K562 (cell line): ENCODE measurements at regions of chrX and their contacts with region 1.

Region 1: GRCh38 chrX:149631234-149632165 is at the start of gene TMEM185A:
- DNase-seq: peak; percentile 76 to 88 (median 82)
- ATAC-seq: peak; percentile 90
- H3K4me3 ChIP-seq: peak within 1 kb of the TSS; percentile 58
- H3K27ac ChIP-seq: no peak within 1 kb of the TSS
- H3K4me1 ChIP-seq: peaks cover 0 to 11% of the 10 kb centered on the region in 2 experiments; a peak in 2 of 5 replicates
- H3K27me3 ChIP-seq: peaks cover 0 to 9% of the 10 kb centered on the region in 2 experiments; a peak in 2 of 5 replicates
- CTCF ChIP-seq: no peak
- EP300 ChIP-seq: no peak
- POLR2A ChIP-seq: no peak
- RAD21 ChIP-seq: no peak
- polyA plus RNA-seq, gene TMEM185A: 0.97 to 1.7 TPM

Region 2: GRCh38 chrX:149504915-149505651 is 126.4 kb before region 1 on chrX and contains the start of gene IDS:
- CTCF ChIA-PET with region 1: no interaction called
- POLR2A ChIA-PET with region 1: no interaction called
- in situ Hi-C with region 1: loop called (anchors 25 kb)
- intact Hi-C with region 1: no loop called
- DNase-seq: peak; percentile 86 to 93 (median 88)
- ATAC-seq: peak; percentile 98
- H3K4me3 ChIP-seq: peak within 1 kb of the TSS; percentile 42
- H3K27ac ChIP-seq: peak within 1 kb of the TSS; percentile 59; the same call in 2 of the 3 replicates
- H3K4me1 ChIP-seq: peaks cover 11 to 14% of the 10 kb centered on the region in 2 experiments; a peak in 2 of 5 replicates
- H3K27me3 ChIP-seq: peaks cover 0 to 7% of the 10 kb centered on the region in 2 experiments; a peak in 3 of 5 replicates
- CTCF ChIP-seq: peak in 1 of 3 experiments; percentile 18; a peak in 1 of 6 replicates
- EP300 ChIP-seq: no peak
- POLR2A ChIP-seq: peak; percentile 73
- RAD21 ChIP-seq: no peak
- polyA plus RNA-seq, gene IDS: 2.0 to 2.2 TPM